Lower lobe of right lung (tissue), 2 donors: ENCODE measurements at regions of chr12 and their contacts with region 1.

Region 1: DNA sequence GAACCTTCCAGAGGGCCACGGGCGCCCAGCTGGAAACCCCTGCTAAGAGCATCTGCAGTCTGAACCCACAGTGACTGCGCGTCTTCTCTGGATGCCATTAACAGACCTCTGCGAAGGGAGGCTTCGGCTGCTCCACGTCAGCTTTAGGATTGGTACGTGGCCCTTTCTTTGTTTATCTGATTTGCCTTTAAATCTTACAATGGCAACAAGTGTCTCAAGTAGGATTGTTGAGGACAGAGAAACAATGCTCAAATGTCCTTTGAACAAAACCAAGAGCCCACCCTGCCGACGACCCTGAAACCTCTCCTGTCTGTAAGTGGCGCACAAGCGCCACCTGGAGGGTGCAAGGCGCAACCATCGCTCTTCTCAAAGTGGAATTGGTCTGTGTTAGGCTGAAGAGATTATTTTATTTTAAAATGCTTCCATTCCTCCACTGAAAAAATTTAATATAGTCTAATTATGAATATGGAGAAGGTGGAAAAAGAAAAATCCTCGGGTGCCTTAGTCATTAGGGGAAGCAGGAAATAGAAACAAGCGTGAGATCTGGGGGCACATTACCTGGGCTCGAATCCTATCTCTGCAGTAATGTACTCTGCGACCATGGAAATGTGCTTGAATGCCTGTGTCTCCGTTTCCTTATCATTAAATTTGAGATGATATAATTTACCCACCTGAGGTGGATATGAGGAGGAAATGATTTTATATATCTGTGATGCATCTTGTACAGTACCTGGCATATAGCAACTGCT is 82.6 kb upstream of the PTPRB start:
- DNase-seq: peak; percentile 50
- ATAC-seq: peak; percentile 73 to 75
- H3K4me3 ChIP-seq: peak overlapping the region; percentile 3
- H3K27ac ChIP-seq: peak overlapping the region; percentile 43
- H3K4me1 ChIP-seq: peaks cover 9% of the 10 kb centered on the region
- H3K27me3 ChIP-seq: peaks cover 6% of the 10 kb centered on the region
- CTCF ChIP-seq: peak; percentile 87

Region 2: GRCh38 chr12:70576346-70577282 is 143.2 kb before region 1 on chr12:
- intact Hi-C with region 1: no loop called
- DNase-seq: no peak
- ATAC-seq: peak; percentile 60 to 80
- H3K4me3 ChIP-seq: no peak overlapping the region
- H3K27ac ChIP-seq: no peak overlapping the region
- H3K4me1 ChIP-seq: peaks cover 4% of the 10 kb centered on the region
- H3K27me3 ChIP-seq: no peaks in the 10 kb centered on the region
- CTCF ChIP-seq: peak; percentile 79

Region 3: DNA sequence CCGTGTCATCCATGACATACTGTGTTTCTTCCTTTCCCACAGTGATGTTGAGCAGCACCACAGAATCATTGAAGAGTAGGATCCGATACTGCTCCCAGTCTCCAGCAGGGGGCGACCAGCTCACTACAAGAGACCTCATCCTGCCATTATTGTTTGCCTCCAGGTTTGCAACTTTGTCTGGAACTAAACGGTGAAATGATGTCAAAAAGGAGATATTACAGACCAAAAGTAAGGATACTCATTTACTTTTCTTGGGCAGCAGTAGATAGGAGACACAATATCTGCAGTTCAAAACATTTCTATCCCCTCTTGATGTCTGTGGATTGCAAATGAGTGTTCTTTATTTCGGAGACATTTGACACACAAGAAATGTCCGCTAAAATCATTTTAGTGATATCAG is 129.8 kb before region 1 on chr12:
- intact Hi-C with region 1: loop called (anchors 10 kb)
- DNase-seq: peak; percentile 76
- ATAC-seq: peak; percentile 83 to 84
- H3K4me3 ChIP-seq: no peak overlapping the region
- H3K27ac ChIP-seq: no peak overlapping the region
- H3K4me1 ChIP-seq: no peaks in the 10 kb centered on the region
- H3K27me3 ChIP-seq: no peaks in the 10 kb centered on the region
- CTCF ChIP-seq: peak; percentile 88